Thyroid gland (tissue), 4 donors: ENCODE measurements at regions of chr3 and their contacts with region 1.

Region 1: GRCh38 chr3:143119009-143119914 is at the start of gene CHST2:
- DNase-seq: peak; percentile 64 to 73
- H3K4me3 ChIP-seq: peak within 1 kb of the TSS; percentile 68 to 95 (median 80)
- H3K27ac ChIP-seq: peak within 1 kb of the TSS; percentile 67 to 83 (median 79)
- H3K4me1 ChIP-seq: peaks cover 7 to 9% of the 10 kb centered on the region in 2 donors
- H3K27me3 ChIP-seq: no peaks in the 10 kb centered on the region
- CTCF ChIP-seq: peak in 1 of 6 experiments; percentile 7
- POLR2A ChIP-seq: peak in 1 of 2 donors; percentile 68
- total RNA-seq, gene CHST2: 8.5 to 14.0 (median 12.2) TPM

Region 2: DNA sequence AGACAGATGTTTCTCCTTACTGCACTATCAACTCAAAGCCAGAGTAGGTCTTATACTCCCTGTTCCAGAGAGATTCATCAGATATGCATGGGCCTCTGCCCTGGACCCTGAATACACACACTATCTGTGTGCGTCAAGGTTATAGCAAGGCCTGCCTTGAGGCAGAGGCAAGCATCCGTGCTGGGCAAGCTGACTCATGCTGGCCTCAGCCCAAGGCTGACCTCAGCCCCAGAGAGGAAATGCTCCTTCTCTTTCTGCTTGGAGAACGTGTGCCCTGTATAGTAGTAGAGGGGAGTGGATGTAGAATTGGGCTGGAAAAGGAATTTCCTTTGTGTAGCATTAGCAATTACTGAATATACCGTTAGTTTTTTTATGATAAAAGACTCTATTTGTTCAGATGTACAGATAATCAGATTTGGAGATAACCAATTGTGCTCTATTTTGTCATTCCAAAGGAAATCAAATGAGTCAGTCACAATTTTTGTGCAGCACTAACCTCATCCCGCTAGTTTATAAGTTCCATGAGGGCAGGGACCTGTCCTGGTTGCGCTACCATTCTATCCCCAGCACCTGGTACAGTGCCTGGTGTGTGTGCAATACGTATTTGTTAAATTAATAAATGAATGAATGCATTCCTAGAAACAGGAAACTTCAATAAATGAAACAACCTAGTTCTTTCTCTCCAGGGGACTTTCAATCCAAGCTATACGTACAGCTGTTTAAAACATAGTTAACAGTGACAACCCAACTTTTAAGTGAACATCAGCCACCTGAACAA is 142.5 kb before region 1 on chr3:
- intact Hi-C with region 1: no loop called
- DNase-seq: peak; percentile 18 to 39
- H3K4me3 ChIP-seq: no peak overlapping the region
- H3K27ac ChIP-seq: no peak overlapping the region
- H3K4me1 ChIP-seq: no peaks in the 10 kb centered on the region
- H3K27me3 ChIP-seq: no peaks in the 10 kb centered on the region
- CTCF ChIP-seq: no peak
- POLR2A ChIP-seq: no peak

Region 3: GRCh38 chr3:143644370-143645089 is 525.3 kb after region 1 on chr3:
- intact Hi-C with region 1: loop called (anchors 10 kb)
- DNase-seq: peak; percentile 73 to 78
- H3K4me3 ChIP-seq: no peak overlapping the region
- H3K27ac ChIP-seq: peak overlapping the region; percentile 41 to 64 (median 64)
- H3K4me1 ChIP-seq: peaks cover 0 to 13% of the 10 kb centered on the region in 2 donors
- H3K27me3 ChIP-seq: no peaks in the 10 kb centered on the region
- CTCF ChIP-seq: peak; percentile 21 to 93 (median 68)
- POLR2A ChIP-seq: no peak